ENCODE measurements at regions of chr2 and their contacts with region 1.

Region 1: DNA sequence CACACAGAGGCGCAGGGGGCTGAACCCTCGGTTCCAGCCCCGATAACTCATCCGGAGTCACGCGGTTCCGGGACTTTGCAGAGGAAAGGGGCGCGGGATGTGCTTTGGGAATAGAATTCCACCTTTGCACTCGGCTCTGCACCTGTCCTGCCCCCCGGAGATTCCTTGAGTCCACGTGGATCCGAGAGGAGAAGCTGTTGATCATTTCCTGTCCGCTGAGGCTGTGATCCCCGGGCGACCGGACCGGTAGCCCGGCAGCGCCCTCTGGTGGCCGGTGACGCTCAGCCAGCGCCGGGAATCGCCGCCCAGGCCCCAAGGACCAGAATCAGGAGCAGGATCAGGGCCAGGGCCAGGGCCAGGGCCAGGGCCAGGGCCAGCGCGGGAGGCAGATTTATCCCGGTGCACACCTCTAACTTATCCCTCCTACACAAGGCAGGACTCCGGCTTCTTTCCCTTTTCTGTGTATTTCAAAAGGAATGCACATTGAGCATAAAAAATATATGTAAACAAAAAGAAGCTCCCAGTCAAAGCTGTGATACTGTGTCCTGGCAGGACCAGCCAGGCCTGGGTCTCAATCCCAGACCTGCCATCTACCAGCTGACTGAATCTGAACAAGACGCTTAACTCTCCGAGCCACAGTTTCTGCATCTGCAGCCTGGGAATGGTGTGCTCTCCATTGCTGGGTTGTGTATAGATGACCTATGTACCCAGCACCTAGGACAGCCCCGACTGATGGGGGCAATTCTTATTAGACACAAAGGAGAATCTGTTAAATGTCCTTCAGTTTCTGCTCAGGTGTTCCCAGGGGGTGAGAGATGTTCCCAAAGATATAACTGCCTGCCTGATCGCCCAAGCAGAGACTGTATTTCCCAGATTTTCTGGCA is 8.5 kb upstream of the SPATA3 start:
- DNase-seq: peak in 1 of 2 donors; percentile 80
- H3K4me3 ChIP-seq: peak overlapping the region; percentile 53 to 64
- H3K27ac ChIP-seq: no peak overlapping the region
- H3K4me1 ChIP-seq: peaks cover 0 to 3% of the 10 kb centered on the region in 2 donors
- H3K27me3 ChIP-seq: no peaks in the 10 kb centered on the region
- CTCF ChIP-seq: peak; percentile 81 to 96 (median 92)

Region 2: GRCh38 chr2:230824406-230824978 is 162.9 kb before region 1 on chr2:
- intact Hi-C with region 1: loop called (anchors 1 kb)
- DNase-seq: peak in 1 of 2 donors; percentile 72
- H3K4me3 ChIP-seq: peak overlapping the region; percentile 46 to 58
- H3K27ac ChIP-seq: no peak overlapping the region
- H3K4me1 ChIP-seq: peaks cover 4 to 12% of the 10 kb centered on the region in 2 donors
- H3K27me3 ChIP-seq: no peaks in the 10 kb centered on the region
- CTCF ChIP-seq: peak; percentile 72 to 80 (median 73)

Region 3: DNA sequence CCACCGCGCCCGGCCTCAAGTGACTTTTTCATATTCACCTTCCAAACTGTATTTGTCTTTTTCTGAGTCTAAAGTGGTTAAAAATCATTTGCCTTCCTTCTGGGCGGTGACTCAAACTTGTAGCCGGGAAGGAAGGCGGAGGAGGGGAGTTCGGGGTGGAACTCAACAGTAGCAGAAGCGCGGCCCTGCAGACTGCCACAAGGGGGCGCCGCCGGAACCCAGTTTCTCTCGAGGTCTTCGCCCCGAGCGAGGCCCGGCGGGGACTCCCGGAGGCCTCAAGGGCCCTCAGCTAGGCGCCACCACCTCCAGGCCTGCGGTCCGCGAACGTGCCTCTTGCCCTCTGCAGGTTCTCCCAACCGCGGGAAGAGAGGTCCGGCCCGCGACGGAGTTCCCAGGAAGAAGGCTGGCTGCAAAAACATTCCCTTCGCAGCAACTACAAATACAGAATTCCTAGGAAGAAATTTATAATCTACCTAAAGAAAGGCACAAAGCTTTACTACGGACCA is 139.4 kb before region 1 on chr2:
- intact Hi-C with region 1: loop called (anchors 1 kb)
- DNase-seq: peak; percentile 52 to 93
- H3K4me3 ChIP-seq: peak overlapping the region in 1 of 2 donors; percentile 36
- H3K27ac ChIP-seq: no peak overlapping the region
- H3K4me1 ChIP-seq: no peaks in the 10 kb centered on the region
- H3K27me3 ChIP-seq: peaks cover 7% of the 10 kb centered on the region
- CTCF ChIP-seq: peak; percentile 74 to 95 (median 84)

Region 4: DNA sequence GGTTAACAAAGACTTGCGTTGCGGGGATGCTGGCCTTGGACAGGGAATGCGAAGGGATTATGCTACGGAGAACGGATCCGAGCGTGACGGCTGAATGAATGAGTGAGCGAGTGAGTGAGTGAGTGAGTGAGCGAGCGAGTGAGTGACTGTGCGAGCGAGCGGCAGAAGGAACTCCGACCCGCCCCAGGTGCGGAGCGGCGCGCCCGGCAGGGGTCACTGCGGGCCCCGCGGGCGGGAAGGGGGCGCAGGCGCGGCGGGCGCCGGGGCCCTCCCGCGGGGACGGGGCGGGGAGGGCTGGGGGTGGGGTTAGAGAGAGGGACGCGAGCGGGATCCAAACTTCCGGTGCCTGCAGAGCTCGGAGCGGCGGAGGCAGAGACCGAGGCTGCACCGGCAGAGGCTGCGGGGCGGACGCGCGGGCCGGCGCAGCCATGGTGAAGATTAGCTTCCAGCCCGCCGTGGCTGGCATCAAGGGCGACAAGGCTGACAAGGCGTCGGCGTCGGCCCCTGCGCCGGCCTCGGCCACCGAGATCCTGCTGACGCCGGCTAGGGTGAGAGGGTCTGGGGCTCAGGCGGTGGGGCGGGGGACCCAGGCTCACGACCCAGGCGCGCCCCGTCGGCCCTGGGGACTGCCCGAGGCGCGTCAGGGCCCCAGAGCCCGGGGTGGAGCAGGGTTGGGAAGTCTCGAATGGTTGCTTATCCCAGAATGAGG is 122.6 kb before region 1 on chr2 and contains the start of gene ITM2C:
- intact Hi-C with region 1: loop called (anchors 2 kb)
- DNase-seq: peak in 1 of 2 donors; percentile 79
- H3K4me3 ChIP-seq: peak within 1 kb of the TSS; percentile 84 to 96
- H3K27ac ChIP-seq: peak within 1 kb of the TSS; percentile 38 to 57
- H3K4me1 ChIP-seq: peaks cover 3 to 11% of the 10 kb centered on the region in 2 donors
- H3K27me3 ChIP-seq: no peaks in the 10 kb centered on the region
- CTCF ChIP-seq: peak in 2 of 3 experiments; percentile 29 to 32
- total RNA-seq, gene ITM2C: 84.9 TPM

Measured in ascending aorta (tissue), 2 donors.